Activated B cell treated with CpG ODN at 0.5 μM for 24 hours (primary cell): ENCODE measurements at regions of chr13 and their contacts with region 1.

Region 1: GRCh38 chr13:45280751-45281634 is 60.0 kb downstream of the TPT1 start:
- DNase-seq: peak; percentile 31
- ATAC-seq: peak; percentile 93
- H3K4me3 Mint-ChIP-seq: no peak overlapping the region
- H3K27ac Mint-ChIP-seq: no peak overlapping the region
- H3K4me1 Mint-ChIP-seq: peaks cover 14% of the 10 kb centered on the region
- H3K27me3 Mint-ChIP-seq: no peaks in the 10 kb centered on the region
- CTCF ChIP-seq: no peak

Region 2: DNA sequence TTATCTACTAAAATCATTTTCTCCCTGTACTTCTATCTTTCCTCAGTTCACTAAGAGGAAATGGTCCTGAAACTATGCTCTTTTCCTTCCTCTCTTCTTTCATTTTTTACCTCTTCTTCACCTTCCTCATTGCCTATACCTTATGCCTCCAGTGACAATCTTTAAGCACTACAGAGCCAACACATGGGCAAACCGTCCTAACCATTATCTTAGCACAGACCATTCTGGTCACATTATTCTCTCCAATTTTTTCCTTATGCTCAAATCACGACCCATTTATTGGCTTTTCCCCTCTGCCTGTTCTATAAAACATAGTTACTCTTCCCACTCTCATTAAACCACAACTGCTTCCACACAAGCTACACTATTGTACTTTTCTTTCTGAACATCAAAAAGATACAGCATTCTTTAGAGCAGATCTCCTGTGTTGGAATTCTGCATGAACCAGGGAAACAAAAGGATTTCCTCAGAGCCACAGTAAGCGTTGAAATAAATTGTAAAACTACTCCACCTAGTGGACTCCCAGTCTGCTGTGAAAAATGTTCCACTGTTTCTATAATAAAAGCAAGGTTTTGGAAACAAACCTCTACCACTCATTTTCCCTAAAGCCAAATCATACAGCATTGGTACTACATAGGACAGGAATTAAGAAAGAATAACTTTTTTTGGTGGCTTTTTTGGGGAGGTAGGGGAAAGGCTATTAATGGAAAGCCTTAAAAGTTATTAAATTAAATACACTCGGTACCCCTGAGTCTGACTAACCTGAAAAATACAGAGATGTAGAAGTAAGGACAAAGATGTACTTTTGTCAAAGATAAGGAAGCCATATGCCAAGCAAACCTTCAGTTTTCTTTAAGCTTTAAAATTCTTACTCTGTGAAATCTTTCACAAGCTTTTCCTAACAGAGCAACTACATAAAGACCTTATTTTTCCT is 311.2 kb before region 1 on chr13:
- CTCF ChIA-PET with region 1: interaction called, 7 read pairs
- POLR2A ChIA-PET with region 1: no interaction called
- intact Hi-C with region 1: loop called (anchors 1 kb)
- DNase-seq: no peak
- ATAC-seq: no peak
- H3K4me3 Mint-ChIP-seq: no peak overlapping the region
- H3K27ac Mint-ChIP-seq: no peak overlapping the region
- H3K4me1 Mint-ChIP-seq: no peaks in the 10 kb centered on the region
- H3K27me3 Mint-ChIP-seq: no peaks in the 10 kb centered on the region
- CTCF ChIP-seq: no peak

Region 3: GRCh38 chr13:45310341-45311125 is 29.5 kb after region 1 on chr13:
- CTCF ChIA-PET with region 1: interaction called, 5 read pairs
- POLR2A ChIA-PET with region 1: no interaction called
- intact Hi-C with region 1: loop called (anchors 2 kb)
- DNase-seq: no peak
- ATAC-seq: no peak
- H3K4me3 Mint-ChIP-seq: peak overlapping the region; percentile 83
- H3K27ac Mint-ChIP-seq: no peak overlapping the region
- H3K4me1 Mint-ChIP-seq: peaks cover 18% of the 10 kb centered on the region
- H3K27me3 Mint-ChIP-seq: peaks cover 7% of the 10 kb centered on the region
- CTCF ChIP-seq: no peak

Region 4: GRCh38 chr13:47175172-47175866 is 1894.3 kb after region 1 on chr13:
- CTCF ChIA-PET with region 1: no interaction called
- POLR2A ChIA-PET with region 1: no interaction called
- intact Hi-C with region 1: no loop called
- DNase-seq: no peak
- ATAC-seq: no peak
- H3K4me3 Mint-ChIP-seq: no peak overlapping the region
- H3K27ac Mint-ChIP-seq: no peak overlapping the region
- H3K4me1 Mint-ChIP-seq: no peaks in the 10 kb centered on the region
- H3K27me3 Mint-ChIP-seq: peaks cover 2% of the 10 kb centered on the region
- CTCF ChIP-seq: no peak